Naive thymus-derived CD8-positive, alpha-beta T cell (primary cell): ENCODE measurements at regions of chr17 and their contacts with region 1.

Region 1: GRCh38 chr17:58417300-58418092 is at the start of gene RNF43:
- DNase-seq: peak; percentile 62 to 94 (median 86)
- ATAC-seq: peak; percentile 100
- H3K4me3 Mint-ChIP-seq: peak within 1 kb of the TSS in 2 of 10 donors; percentile 5 to 52
- H3K27ac Mint-ChIP-seq: peak within 1 kb of the TSS in 8 of 10 donors; percentile 17 to 80 (median 64)
- H3K4me1 Mint-ChIP-seq: peaks cover 3 to 15% (median 12%) of the 10 kb centered on the region in 4 donors
- H3K27me3 Mint-ChIP-seq: no peaks in the 10 kb centered on the region
- polyA plus RNA-seq, gene RNF43: 0.07 to 0.90 (median 0.75) TPM

Region 2: DNA sequence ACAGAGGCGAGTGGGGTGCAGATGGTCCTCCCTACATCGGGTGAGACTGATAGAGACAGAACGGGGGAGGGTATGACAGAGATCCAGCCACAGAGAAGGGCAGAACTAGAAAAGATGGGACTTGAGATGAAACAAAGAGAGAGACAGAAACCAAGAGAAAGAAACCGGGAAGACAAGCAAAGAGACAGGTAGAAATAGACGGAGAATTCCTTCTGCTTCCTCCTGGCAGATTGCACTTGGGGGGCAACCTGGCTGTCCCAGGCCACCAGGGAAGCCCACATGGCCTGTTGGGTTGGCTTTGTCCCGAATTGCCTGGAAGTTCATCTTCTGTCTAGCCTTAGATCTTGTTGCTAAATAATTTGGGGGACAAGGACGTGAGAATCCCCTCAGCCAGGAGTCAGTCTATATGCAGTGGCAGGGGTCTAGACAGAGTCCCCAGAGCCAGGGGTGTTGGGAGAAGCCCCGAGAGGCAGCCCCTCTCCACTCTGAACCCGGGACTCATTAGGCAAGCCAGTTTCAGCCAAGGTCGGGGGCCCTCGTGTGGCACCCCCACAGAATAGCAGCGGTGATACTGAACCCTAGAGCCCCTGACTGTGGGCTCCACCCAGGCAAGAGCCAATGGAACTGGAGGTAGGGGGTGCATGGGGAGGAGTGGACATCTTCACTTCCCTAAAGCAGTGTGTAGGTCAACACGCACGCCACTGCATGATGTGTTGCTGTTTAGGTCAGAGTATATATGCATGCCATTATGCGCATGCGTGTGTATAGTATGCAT is 88.3 kb before region 1 on chr17:
- POLR2A ChIA-PET with region 1: interaction called, 17 read pairs
- DNase-seq: peak; percentile 49 to 81 (median 64)
- ATAC-seq: peak; percentile 19 to 49
- H3K4me3 Mint-ChIP-seq: peak overlapping the region; percentile 82 to 100 (median 96)
- H3K27ac Mint-ChIP-seq: peak overlapping the region; percentile 86 to 98 (median 95)
- H3K4me1 Mint-ChIP-seq: peaks cover 41 to 65% (median 50%) of the 10 kb centered on the region in 4 donors
- H3K27me3 Mint-ChIP-seq: no peaks in the 10 kb centered on the region

Region 3: GRCh38 chr17:58337600-58338453 is 79.7 kb before region 1 on chr17:
- POLR2A ChIA-PET with region 1: interaction called, 10 read pairs
- DNase-seq: peak; percentile 74 to 95 (median 88)
- ATAC-seq: peak; percentile 67 to 79
- H3K4me3 Mint-ChIP-seq: peak overlapping the region; percentile 82 to 100 (median 96)
- H3K27ac Mint-ChIP-seq: peak overlapping the region; percentile 91 to 99 (median 96)
- H3K4me1 Mint-ChIP-seq: peaks cover 49 to 89% (median 75%) of the 10 kb centered on the region in 4 donors
- H3K27me3 Mint-ChIP-seq: no peaks in the 10 kb centered on the region

Region 4: GRCh38 chr17:58504826-58505521 is 87.5 kb after region 1 on chr17:
- POLR2A ChIA-PET with region 1: no interaction called
- DNase-seq: no peak
- ATAC-seq: peak in 1 of 2 donors; percentile 41
- H3K4me3 Mint-ChIP-seq: no peak overlapping the region
- H3K27ac Mint-ChIP-seq: peak overlapping the region in 3 of 10 donors; percentile 34 to 80 (median 74)
- H3K4me1 Mint-ChIP-seq: peaks cover 4 to 12% (median 4%) of the 10 kb centered on the region in 4 donors
- H3K27me3 Mint-ChIP-seq: no peaks in the 10 kb centered on the region